Mammary epithelial cell (primary cell): ENCODE measurements at regions of chr11 and their contacts with region 1.

Region 1: DNA sequence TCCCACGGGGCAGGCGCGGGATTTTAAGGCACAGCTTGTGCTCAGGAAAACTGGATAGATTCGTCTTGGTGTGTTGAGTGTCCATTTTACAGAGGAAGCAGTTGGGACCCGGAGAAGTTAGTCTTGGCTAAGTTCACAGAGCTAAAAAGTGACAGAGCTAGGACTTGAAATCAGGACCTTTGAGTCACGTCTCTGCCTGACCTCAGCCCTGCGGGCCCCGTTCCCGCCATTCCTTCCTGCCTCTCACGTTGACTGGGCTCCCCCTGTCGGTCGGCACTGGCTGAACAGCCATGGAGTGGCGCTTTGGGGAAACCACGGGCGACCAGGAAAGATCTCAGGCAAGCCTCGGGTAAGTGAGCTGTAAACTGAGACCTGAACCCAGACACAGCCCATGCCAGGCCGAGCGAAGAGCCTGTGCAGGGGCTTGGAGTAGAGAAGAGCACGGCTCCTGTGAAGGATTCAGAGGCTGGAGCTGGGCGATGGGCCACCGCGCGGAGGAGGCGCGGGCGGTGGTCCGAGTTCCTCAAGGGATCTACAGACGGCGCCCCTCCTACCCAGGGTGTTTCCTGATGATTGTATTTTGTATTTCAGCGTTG is 54.1 kb downstream of the WNT11 start:
- DNase-seq: peak; percentile 66
- H3K4me3 ChIP-seq: peak overlapping the region in 2 of 3 experiments; percentile 35 to 40
- H3K27ac ChIP-seq: no peak overlapping the region
- H3K4me1 ChIP-seq: peaks cover 3% of the 10 kb centered on the region
- H3K27me3 ChIP-seq: no peaks in the 10 kb centered on the region
- CTCF ChIP-seq: peak; percentile 93 to 95

Region 2: GRCh38 chr11:75802913-75803820 is 349.0 kb before region 1 on chr11:
- CTCF ChIA-PET with region 1: interaction called, 5 read pairs
- dilution Hi-C with region 1: no loop called
- in situ Hi-C with region 1: no loop called
- intact Hi-C with region 1: loop called (anchors 1 kb)
- DNase-seq: peak; percentile 45
- H3K4me3 ChIP-seq: no peak overlapping the region
- H3K27ac ChIP-seq: no peak overlapping the region
- H3K4me1 ChIP-seq: no peaks in the 10 kb centered on the region
- H3K27me3 ChIP-seq: no peaks in the 10 kb centered on the region
- CTCF ChIP-seq: peak; percentile 90 to 92

Region 3: GRCh38 chr11:75903276-75903675 is 248.9 kb before region 1 on chr11:
- CTCF ChIA-PET with region 1: no interaction called
- dilution Hi-C with region 1: loop called (anchors 25 kb)
- in situ Hi-C with region 1: loop called (anchors 5 kb)
- intact Hi-C with region 1: no loop called
- DNase-seq: no peak
- H3K4me3 ChIP-seq: no peak overlapping the region
- H3K27ac ChIP-seq: no peak overlapping the region
- H3K4me1 ChIP-seq: no peaks in the 10 kb centered on the region
- H3K27me3 ChIP-seq: no peaks in the 10 kb centered on the region
- CTCF ChIP-seq: no peak

Region 4: GRCh38 chr11:76194872-76195668 is 42.9 kb after region 1 on chr11:
- CTCF ChIA-PET with region 1: no interaction called
- dilution Hi-C with region 1: loop called (anchors 5 kb)
- in situ Hi-C with region 1: no loop called
- intact Hi-C with region 1: no loop called
- DNase-seq: no peak
- H3K4me3 ChIP-seq: no peak overlapping the region
- H3K27ac ChIP-seq: no peak overlapping the region
- H3K4me1 ChIP-seq: no peaks in the 10 kb centered on the region
- H3K27me3 ChIP-seq: no peaks in the 10 kb centered on the region
- CTCF ChIP-seq: no peak